Right ventricle myocardium inferior (tissue), 1 donor: ENCODE measurements at regions of chr1 and their contacts with region 1.

Region 1: GRCh38 chr1:205528887-205529825 is 24.7 kb downstream of the CDK18 start:
- DNase-seq: peak; percentile 91
- ATAC-seq: peak; percentile 60

Region 2: GRCh38 chr1:205568469-205569361 is 39.6 kb after region 1 on chr1:
- intact Hi-C with region 1: loop called (anchors 1 kb)
- DNase-seq: no peak
- ATAC-seq: no peak

Region 3: DNA sequence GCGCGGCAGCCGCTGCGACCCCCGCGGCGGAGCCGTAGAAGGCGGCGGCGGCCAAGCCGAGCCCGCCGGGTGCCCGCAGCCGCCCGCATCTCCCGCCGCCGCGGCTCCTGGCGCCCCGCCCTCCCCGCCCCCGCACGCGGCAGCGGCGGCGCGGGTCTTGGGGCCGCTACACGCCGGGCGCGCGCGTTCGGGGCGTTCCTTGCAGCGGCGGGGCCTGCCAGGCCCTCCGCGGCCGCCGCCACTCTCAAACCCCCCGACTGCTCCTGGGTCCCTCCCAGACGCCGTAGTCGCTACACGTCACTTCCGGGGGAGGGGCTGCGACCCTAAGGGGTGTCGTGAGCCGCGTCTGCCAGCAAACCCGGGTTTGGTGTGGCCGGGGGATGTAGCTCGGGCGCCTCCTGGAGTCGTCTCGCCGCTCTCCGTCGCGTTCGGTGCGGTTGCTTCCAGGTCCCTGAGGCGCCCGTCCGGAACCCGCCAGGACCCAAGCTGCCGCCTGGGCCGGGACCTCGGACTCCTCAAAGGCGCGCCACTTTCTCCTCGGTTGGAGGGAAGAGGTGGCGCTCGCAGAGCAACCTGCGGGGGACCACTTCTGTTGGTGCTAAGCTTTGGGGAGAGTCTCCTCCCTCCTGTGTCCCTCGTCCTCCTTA is 102.7 kb after region 1 on chr1 and contains the start of gene ELK4:
- intact Hi-C with region 1: loop called (anchors 2 kb)
- DNase-seq: peak; percentile 99
- ATAC-seq: peak; percentile 99
- total RNA-seq, gene ELK4: 35.5 TPM

Region 4: GRCh38 chr1:205711104-205712020 is 182.2 kb after region 1 on chr1:
- intact Hi-C with region 1: loop called (anchors 2 kb)
- DNase-seq: no peak
- ATAC-seq: peak; percentile 83